ENCODE measurements at regions of chr3 and their contacts with region 1.

Region 1: DNA sequence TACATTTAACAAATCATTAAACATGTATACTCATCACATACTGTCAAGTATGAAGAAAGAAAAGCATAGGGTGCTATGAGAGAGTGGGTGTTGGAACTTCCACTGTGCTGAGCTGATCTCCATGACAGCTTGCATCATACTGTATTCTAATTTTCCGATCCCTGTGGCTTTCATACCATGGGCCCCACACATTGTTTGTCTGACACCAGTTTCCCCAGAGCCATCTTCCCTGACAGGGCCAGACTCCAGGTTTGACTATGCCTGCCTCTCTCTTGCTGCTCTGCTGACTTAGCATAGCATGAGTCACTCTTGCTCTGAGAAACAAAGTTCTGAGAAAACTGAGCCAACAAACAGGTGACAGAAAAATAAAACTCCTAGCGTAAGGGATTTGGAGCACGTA is 37.0 kb upstream of the CASR start:
- DNase-seq: peak; percentile 90
- H3K4me3 Mint-ChIP-seq: no peak overlapping the region
- H3K27ac Mint-ChIP-seq: peak overlapping the region; percentile 87
- H3K4me1 Mint-ChIP-seq: peaks cover 34% of the 10 kb centered on the region
- H3K27me3 Mint-ChIP-seq: peaks cover 3% of the 10 kb centered on the region

Region 2: GRCh38 chr3:121654493-121655385 is 491.7 kb before region 1 on chr3:
- CTCF ChIA-PET with region 1: no interaction called
- POLR2A ChIA-PET with region 1: no interaction called
- intact Hi-C with region 1: no loop called
- DNase-seq: no peak
- H3K4me3 Mint-ChIP-seq: peak overlapping the region; percentile 53
- H3K27ac Mint-ChIP-seq: peak overlapping the region; percentile 87
- H3K4me1 Mint-ChIP-seq: peaks cover 72% of the 10 kb centered on the region
- H3K27me3 Mint-ChIP-seq: no peaks in the 10 kb centered on the region

Region 3: GRCh38 chr3:121834696-121835464 is 311.6 kb before region 1 on chr3 and contains the starts of genes EAF2 and IQCB1:
- CTCF ChIA-PET with region 1: no interaction called
- POLR2A ChIA-PET with region 1: no interaction called
- intact Hi-C with region 1: loop called (anchors 1 kb)
- DNase-seq: peak; percentile 98
- H3K4me3 Mint-ChIP-seq: peak within 1 kb of the TSS; percentile 98
- H3K27ac Mint-ChIP-seq: peak within 1 kb of the TSS; percentile 84
- H3K4me1 Mint-ChIP-seq: peaks cover 37% of the 10 kb centered on the region
- H3K27me3 Mint-ChIP-seq: no peaks in the 10 kb centered on the region
- total RNA-seq, gene EAF2: 14.4 to 14.8 TPM
- total RNA-seq, gene IQCB1: 36.8 to 37.3 TPM

Region 4: DNA sequence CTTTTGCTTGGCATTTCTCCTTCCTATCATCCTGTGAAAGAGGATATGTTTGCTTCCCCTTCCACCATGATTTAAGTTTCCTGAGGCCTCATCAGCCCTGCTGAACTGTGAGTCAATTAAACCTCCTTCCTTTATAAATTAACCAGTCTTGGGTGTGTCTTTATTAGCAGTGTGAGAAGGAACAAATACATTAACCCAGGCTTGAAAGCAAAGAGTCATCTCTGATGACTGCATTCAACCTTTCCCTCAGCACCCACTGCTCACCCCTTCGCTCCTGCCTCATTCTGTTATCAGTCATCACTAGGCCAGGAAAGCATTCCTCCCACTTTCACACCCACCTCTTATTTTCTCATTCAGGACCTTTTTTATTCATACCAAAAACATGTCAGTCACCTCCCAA is 22.6 kb before region 1 on chr3:
- CTCF ChIA-PET with region 1: no interaction called
- POLR2A ChIA-PET with region 1: no interaction called
- intact Hi-C with region 1: loop called (anchors 1 kb)
- DNase-seq: peak; percentile 45
- H3K4me3 Mint-ChIP-seq: no peak overlapping the region
- H3K27ac Mint-ChIP-seq: peak overlapping the region; percentile 31
- H3K4me1 Mint-ChIP-seq: peaks cover 17% of the 10 kb centered on the region
- H3K27me3 Mint-ChIP-seq: peaks cover 10% of the 10 kb centered on the region

Region 5: GRCh38 chr3:122258757-122259371 is 112.4 kb after region 1 on chr3:
- CTCF ChIA-PET with region 1: interaction called, 6 read pairs
- POLR2A ChIA-PET with region 1: interaction called, 4 read pairs
- intact Hi-C with region 1: loop called (anchors 1 kb)
- DNase-seq: peak; percentile 81
- H3K4me3 Mint-ChIP-seq: no peak overlapping the region
- H3K27ac Mint-ChIP-seq: peak overlapping the region; percentile 45
- H3K4me1 Mint-ChIP-seq: peaks cover 19% of the 10 kb centered on the region
- H3K27me3 Mint-ChIP-seq: peaks cover 15% of the 10 kb centered on the region

Region 6: DNA sequence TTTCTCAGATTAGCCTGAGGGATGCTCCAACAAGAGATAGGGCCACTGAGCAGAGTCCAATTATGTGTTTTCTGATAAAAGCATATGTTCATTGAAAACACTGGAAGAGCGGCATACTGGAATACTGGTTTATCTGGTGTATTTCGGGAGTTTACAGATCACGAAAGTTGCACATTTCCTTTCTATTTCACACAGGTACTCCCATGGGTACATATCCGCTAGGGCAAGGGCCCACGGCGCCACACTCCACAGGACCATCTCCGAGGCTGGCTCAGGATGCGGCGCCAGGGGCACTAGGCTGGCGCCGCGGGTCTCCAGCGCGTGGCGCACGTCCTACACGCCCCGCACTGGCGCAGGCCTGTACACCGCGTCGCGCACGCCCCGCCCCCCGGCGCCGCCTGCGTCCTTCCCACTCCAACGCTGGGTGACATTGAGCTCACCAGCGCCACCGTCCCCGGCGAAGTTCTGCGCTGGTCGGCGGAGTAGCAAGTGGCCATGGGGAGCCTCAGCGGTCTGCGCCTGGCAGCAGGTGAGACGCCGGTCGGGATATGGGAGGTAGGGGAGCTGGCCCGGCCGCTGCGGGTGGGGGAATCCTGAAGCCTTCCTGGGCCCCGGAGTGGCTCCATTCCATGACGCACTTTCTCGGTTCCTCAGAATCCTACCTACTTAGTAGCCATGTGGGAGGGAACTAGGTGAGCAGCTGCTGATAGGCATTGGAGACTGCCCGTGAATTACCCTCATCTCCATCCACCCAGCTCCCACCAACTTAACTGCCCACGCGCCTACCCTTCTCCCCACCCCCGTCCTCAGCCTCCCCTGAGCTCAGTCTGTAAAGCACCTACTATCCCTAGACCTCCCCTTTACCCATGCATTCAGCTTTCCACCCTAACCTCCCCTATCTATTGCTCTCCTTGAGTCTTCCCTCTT is 237.6 kb after region 1 on chr3 and contains the start of gene FAM162A:
- CTCF ChIA-PET with region 1: no interaction called
- POLR2A ChIA-PET with region 1: no interaction called
- intact Hi-C with region 1: loop called (anchors 5 kb)
- DNase-seq: peak; percentile 95
- H3K4me3 Mint-ChIP-seq: peak within 1 kb of the TSS; percentile 94
- H3K27ac Mint-ChIP-seq: peak within 1 kb of the TSS; percentile 92
- H3K4me1 Mint-ChIP-seq: peaks cover 60% of the 10 kb centered on the region
- H3K27me3 Mint-ChIP-seq: no peaks in the 10 kb centered on the region
- total RNA-seq, gene FAM162A: 99.1 to 102 TPM

Measured in activated CD4-positive, alpha-beta memory T cell treated with anti-CD3 and anti-CD28 coated beads for 36 hours (primary cell).